T-cell (primary cell): ENCODE measurements at regions of chr16 and their contacts with region 1.

Region 1: DNA sequence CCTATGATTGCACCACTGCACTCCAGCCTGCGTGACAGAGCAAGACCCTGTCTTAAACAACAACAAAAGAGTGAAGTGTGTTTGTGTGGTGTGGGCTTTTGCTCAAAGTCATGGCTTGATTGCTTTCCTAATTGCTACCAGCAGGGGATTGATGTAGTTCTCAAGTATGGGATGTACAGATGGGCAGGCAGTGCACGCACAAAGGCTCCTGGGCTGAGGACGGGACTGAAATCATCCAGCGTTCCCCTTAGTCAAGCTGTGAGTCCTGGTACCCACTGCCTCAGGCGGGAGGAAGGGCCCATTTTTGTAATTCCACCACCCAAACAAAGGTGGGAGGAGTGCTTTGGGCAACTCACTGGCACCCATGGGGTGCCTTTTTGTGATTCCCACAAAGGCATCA is 47.3 kb downstream of the GDE1 start:
- DNase-seq: no peak
- ATAC-seq: no peak
- H3K4me3 ChIP-seq: no peak overlapping the region
- H3K4me3 Mint-ChIP-seq: no peak overlapping the region
- H3K27ac ChIP-seq: no peak overlapping the region
- H3K27ac Mint-ChIP-seq: no peak overlapping the region
- H3K4me1 ChIP-seq: no peaks in the 10 kb centered on the region
- H3K4me1 Mint-ChIP-seq: no peaks in the 10 kb centered on the region
- H3K27me3 ChIP-seq: peaks cover 0 to 7% of the 10 kb centered on the region in 2 experiments
- H3K27me3 Mint-ChIP-seq: peaks cover 4 to 5% of the 10 kb centered on the region in 2 donors

Region 2: GRCh38 chr16:19446300-19446846 is 28.2 kb before region 1 on chr16:
- CTCF ChIA-PET with region 1: no interaction called
- POLR2A ChIA-PET with region 1: no interaction called
- DNase-seq: no peak
- ATAC-seq: no peak
- H3K4me3 ChIP-seq: no peak overlapping the region
- H3K4me3 Mint-ChIP-seq: no peak overlapping the region
- H3K27ac ChIP-seq: no peak overlapping the region
- H3K27ac Mint-ChIP-seq: no peak overlapping the region
- H3K4me1 ChIP-seq: no peaks in the 10 kb centered on the region
- H3K4me1 Mint-ChIP-seq: no peaks in the 10 kb centered on the region
- H3K27me3 ChIP-seq: peaks cover 0 to 8% of the 10 kb centered on the region in 2 experiments
- H3K27me3 Mint-ChIP-seq: peaks cover 9 to 14% of the 10 kb centered on the region in 2 donors

Region 3: DNA sequence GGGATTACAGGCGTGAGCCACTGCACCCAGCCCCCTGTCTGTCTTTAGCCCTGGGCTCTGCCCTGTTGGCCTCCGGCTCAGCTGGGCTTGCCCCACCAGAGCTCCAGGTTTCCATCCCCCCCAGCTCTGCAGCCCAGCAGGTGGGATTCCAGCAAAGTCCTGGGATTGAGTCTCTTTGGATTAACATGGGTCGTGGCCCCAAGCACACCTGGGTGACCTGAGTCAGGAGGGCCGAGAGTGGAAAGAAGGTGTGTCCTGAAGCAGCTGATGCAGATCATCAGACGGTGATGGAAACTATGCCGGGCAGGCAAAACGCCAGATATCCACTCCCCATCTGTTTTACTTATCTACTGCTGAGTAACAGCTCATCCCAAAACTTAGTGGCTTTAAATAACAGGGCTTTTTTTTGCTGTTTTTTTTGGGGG is 171.0 kb after region 1 on chr16:
- CTCF ChIA-PET with region 1: no interaction called
- POLR2A ChIA-PET with region 1: interaction called in 1 of 2 experiments, 12 read pairs
- DNase-seq: no peak
- ATAC-seq: no peak
- H3K4me3 ChIP-seq: no peak overlapping the region
- H3K4me3 Mint-ChIP-seq: no peak overlapping the region
- H3K27ac ChIP-seq: no peak overlapping the region
- H3K27ac Mint-ChIP-seq: no peak overlapping the region
- H3K4me1 ChIP-seq: peaks cover under 1 to 6% of the 10 kb centered on the region in 2 experiments
- H3K4me1 Mint-ChIP-seq: peaks cover 1 to 2% (median 2%) of the 10 kb centered on the region in 3 donors
- H3K27me3 ChIP-seq: no peaks in the 10 kb centered on the region
- H3K27me3 Mint-ChIP-seq: no peaks in the 10 kb centered on the region